CD8-positive, alpha-beta T cell (primary cell): ENCODE measurements at regions of chr11 and their contacts with region 1.

Region 1: GRCh38 chr11:31477528-31478222 is 31.7 kb downstream of the IMMP1L start:
- DNase-seq: no peak
- ATAC-seq: no peak
- H3K4me3 ChIP-seq: no peak overlapping the region
- H3K4me3 Mint-ChIP-seq: no peak overlapping the region
- H3K27ac ChIP-seq: no peak overlapping the region
- H3K27ac Mint-ChIP-seq: no peak overlapping the region
- H3K4me1 ChIP-seq: no peaks in the 10 kb centered on the region
- H3K4me1 Mint-ChIP-seq: peaks cover 7% of the 10 kb centered on the region
- H3K27me3 ChIP-seq: no peaks in the 10 kb centered on the region
- H3K27me3 Mint-ChIP-seq: no peaks in the 10 kb centered on the region
- CTCF ChIP-seq: no peak

Region 2: DNA sequence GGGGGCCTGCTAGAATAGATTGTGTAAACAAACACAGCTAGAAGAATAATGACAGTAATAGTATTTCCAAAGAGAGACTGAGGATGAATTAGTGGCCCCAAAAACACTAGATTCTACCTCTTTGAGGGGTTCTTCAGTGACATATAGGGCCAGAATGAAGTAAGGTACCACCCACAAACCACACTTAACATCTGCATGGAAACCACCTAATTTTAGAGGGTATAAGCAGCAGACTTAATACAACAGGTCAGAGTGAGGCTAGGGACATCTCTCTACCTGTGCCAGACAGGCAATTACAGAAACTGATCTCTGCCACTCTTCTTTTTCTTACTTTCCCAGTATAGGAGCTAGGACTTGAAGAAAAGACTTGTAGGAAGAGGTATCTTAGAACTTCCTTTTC is 52.0 kb after region 1 on chr11:
- CTCF ChIA-PET with region 1: no interaction called
- POLR2A ChIA-PET with region 1: no interaction called
- intact Hi-C with region 1: loop called in 1 of 2 experiments (anchors 10 kb)
- DNase-seq: no peak
- ATAC-seq: no peak
- H3K4me3 ChIP-seq: no peak overlapping the region
- H3K4me3 Mint-ChIP-seq: no peak overlapping the region
- H3K27ac ChIP-seq: no peak overlapping the region
- H3K27ac Mint-ChIP-seq: no peak overlapping the region
- H3K4me1 ChIP-seq: no peaks in the 10 kb centered on the region
- H3K4me1 Mint-ChIP-seq: peaks cover 3% of the 10 kb centered on the region
- H3K27me3 ChIP-seq: no peaks in the 10 kb centered on the region
- H3K27me3 Mint-ChIP-seq: no peaks in the 10 kb centered on the region
- CTCF ChIP-seq: no peak